ENCODE measurements at regions of chr19 and their contacts with region 1.

Region 1: DNA sequence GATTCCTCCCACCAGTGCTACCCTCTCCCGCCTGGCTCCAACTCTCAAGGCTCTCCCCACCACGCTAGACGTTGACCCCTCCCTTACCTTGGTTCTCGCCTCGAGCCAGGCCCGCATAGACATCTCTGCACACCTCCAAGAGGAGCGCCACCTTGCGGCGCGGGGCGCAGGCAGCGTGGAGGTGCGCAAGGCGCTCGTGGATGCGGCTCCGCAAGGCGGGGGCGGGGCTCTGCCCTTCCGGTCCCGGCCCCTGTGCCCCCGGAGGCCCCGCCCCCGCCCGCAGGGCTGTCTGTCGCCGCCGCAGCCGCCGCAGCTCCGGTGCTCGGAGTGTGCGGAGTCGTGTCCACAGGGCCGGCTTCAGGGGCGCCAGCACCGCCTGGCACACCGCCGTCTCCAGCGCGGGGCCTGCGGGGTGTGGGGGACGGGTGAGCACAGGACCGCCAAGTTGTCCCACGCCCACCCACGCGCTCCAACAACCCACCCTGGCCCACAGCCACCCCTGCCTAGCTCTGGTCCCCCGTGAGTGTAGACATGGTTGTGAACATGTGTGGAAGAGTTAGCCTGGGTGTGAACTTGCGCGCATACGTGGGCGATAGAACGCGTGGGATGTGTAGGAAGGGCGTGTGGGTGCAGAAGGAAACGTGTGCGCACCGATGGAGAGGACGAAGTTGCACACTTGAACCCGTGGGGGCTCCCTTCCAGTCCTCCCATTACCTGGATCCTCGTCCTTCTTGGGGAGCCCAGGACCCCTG is 8.0 kb downstream of the RINL start:
- DNase-seq: peak; percentile 90 to 96 (median 94)
- ATAC-seq: peak; percentile 98
- H3K4me3 ChIP-seq: peak overlapping the region; percentile 85
- H3K4me3 Mint-ChIP-seq: peak overlapping the region; percentile 84 to 94 (median 91)
- H3K27ac ChIP-seq: peak overlapping the region; percentile 77
- H3K27ac Mint-ChIP-seq: peak overlapping the region; percentile 73 to 97 (median 88)
- H3K4me1 ChIP-seq: peaks cover 26 to 31% of the 10 kb centered on the region in 2 donors
- H3K4me1 Mint-ChIP-seq: peaks cover 26 to 63% (median 41%) of the 10 kb centered on the region in 7 donors
- H3K27me3 ChIP-seq: no peaks in the 10 kb centered on the region
- H3K27me3 Mint-ChIP-seq: no peaks in the 10 kb centered on the region

Region 2: GRCh38 chr19:38729653-38730469 is 140.2 kb before region 1 on chr19:
- CTCF ChIA-PET with region 1: no interaction called
- POLR2A ChIA-PET with region 1: interaction called, 3 read pairs
- intact Hi-C with region 1: loop called (anchors 1 to 5 kb)
- DNase-seq: peak; percentile 58 to 83 (median 73)
- ATAC-seq: peak; percentile 78
- H3K4me3 ChIP-seq: no peak overlapping the region
- H3K4me3 Mint-ChIP-seq: no peak overlapping the region
- H3K27ac ChIP-seq: no peak overlapping the region
- H3K27ac Mint-ChIP-seq: peak overlapping the region in 3 of 9 donors; percentile 23 to 48 (median 30)
- H3K4me1 ChIP-seq: peaks cover 9 to 10% of the 10 kb centered on the region in 2 donors
- H3K4me1 Mint-ChIP-seq: peaks cover 5 to 39% (median 13%) of the 10 kb centered on the region in 7 donors
- H3K27me3 ChIP-seq: no peaks in the 10 kb centered on the region
- H3K27me3 Mint-ChIP-seq: no peaks in the 10 kb centered on the region

Region 3: GRCh38 chr19:38842439-38843174 is 27.4 kb before region 1 on chr19:
- CTCF ChIA-PET with region 1: interaction called, 7 read pairs
- POLR2A ChIA-PET with region 1: interaction called, 317 read pairs
- intact Hi-C with region 1: no loop called
- DNase-seq: peak in 6 of 9 donors; percentile 57 to 80 (median 76)
- ATAC-seq: peak; percentile 80
- H3K4me3 ChIP-seq: peak overlapping the region; percentile 24
- H3K4me3 Mint-ChIP-seq: peak overlapping the region; percentile 67 to 93 (median 83)
- H3K27ac ChIP-seq: peak overlapping the region; percentile 67
- H3K27ac Mint-ChIP-seq: peak overlapping the region; percentile 89 to 99 (median 92)
- H3K4me1 ChIP-seq: peaks cover 45 to 66% of the 10 kb centered on the region in 2 donors
- H3K4me1 Mint-ChIP-seq: peaks cover 50 to 83% (median 73%) of the 10 kb centered on the region in 7 donors
- H3K27me3 ChIP-seq: no peaks in the 10 kb centered on the region
- H3K27me3 Mint-ChIP-seq: no peaks in the 10 kb centered on the region

Region 4: GRCh38 chr19:38856813-38857212 is 13.2 kb before region 1 on chr19:
- CTCF ChIA-PET with region 1: interaction called, 20 read pairs
- POLR2A ChIA-PET with region 1: interaction called, 317 read pairs
- intact Hi-C with region 1: loop called (anchors 1 kb)
- DNase-seq: no peak
- ATAC-seq: no peak
- H3K4me3 ChIP-seq: no peak overlapping the region
- H3K4me3 Mint-ChIP-seq: peak overlapping the region in 9 of 10 donors; percentile 8 to 85 (median 69)
- H3K27ac ChIP-seq: peak overlapping the region; percentile 62
- H3K27ac Mint-ChIP-seq: peak overlapping the region in 8 of 9 donors; percentile 47 to 97 (median 84)
- H3K4me1 ChIP-seq: peaks cover 17 to 18% of the 10 kb centered on the region in 2 donors
- H3K4me1 Mint-ChIP-seq: peaks cover 6 to 40% (median 30%) of the 10 kb centered on the region in 7 donors
- H3K27me3 ChIP-seq: no peaks in the 10 kb centered on the region
- H3K27me3 Mint-ChIP-seq: peaks cover 0 to 2% (median 0%) of the 10 kb centered on the region in 5 donors

Region 5: DNA sequence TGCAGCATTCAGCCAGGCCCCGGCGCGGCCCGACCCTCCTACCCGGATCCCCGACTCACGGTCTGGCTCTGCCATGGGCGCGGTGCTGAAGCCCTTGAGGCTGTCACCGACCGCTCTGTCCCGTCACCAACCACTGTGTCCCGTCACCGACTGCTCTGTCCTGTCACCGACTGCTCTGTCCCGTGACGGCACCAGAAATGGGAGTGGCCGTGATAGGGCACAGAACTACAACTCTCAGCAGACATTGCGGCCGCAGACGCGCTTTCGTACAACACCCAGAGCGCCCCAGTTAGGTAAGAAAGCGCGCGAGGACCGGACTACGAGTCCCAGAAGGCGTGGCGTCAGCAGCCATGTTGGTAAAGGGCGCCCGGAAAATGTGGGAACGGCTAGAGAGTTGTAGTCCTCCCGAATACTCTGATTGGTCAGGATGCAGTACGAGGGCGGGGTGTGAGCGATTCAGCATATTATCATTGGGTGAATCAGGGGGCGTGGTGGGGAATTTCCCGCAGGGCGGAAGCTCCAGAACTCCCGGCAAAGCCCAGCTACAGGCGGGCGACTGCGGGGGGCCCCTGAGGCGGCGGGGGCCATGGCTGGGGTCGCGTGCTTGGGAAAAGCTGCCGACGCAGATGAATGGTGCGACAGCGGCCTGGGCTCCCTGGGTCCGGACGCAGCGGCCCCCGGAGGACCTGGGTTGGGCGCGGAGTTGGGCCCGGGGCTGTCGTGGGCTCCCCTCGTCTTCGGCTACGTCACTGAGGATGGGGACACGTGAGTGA is 29.6 kb after region 1 on chr19 and contains the starts of genes NFKBIB and SIRT2:
- CTCF ChIA-PET with region 1: no interaction called
- POLR2A ChIA-PET with region 1: no interaction called
- intact Hi-C with region 1: loop called in 1 of 2 experiments (anchors 1 kb)
- DNase-seq: peak; percentile 86 to 100 (median 99)
- ATAC-seq: peak; percentile 93
- H3K4me3 ChIP-seq: peak within 1 kb of the TSS; percentile 74
- H3K4me3 Mint-ChIP-seq: peak within 1 kb of the TSS; percentile 88 to 100 (median 96)
- H3K27ac ChIP-seq: peak within 1 kb of the TSS; percentile 97
- H3K27ac Mint-ChIP-seq: peak within 1 kb of the TSS; percentile 86 to 99 (median 94)
- H3K4me1 ChIP-seq: peaks cover 15 to 29% of the 10 kb centered on the region in 2 donors
- H3K4me1 Mint-ChIP-seq: peaks cover 27 to 74% (median 50%) of the 10 kb centered on the region in 7 donors
- H3K27me3 ChIP-seq: no peaks in the 10 kb centered on the region
- H3K27me3 Mint-ChIP-seq: no peaks in the 10 kb centered on the region
- total RNA-seq, gene NFKBIB: 21.7 to 51.8 (median 34.1) TPM
- total RNA-seq, gene SIRT2: 42.9 to 78.5 (median 54.0) TPM

Region 6: GRCh38 chr19:39083983-39084731 is 214.1 kb after region 1 on chr19 and contains the start of gene ACP7:
- CTCF ChIA-PET with region 1: no interaction called
- POLR2A ChIA-PET with region 1: no interaction called
- intact Hi-C with region 1: no loop called
- DNase-seq: no peak
- ATAC-seq: peak; percentile 52
- H3K4me3 ChIP-seq: peak within 1 kb of the TSS; percentile 40
- H3K4me3 Mint-ChIP-seq: peak within 1 kb of the TSS; percentile 25 to 86 (median 76)
- H3K27ac ChIP-seq: no peak within 1 kb of the TSS
- H3K27ac Mint-ChIP-seq: peak within 1 kb of the TSS in 3 of 9 donors; percentile 32 to 53 (median 45)
- H3K4me1 ChIP-seq: peaks cover 8 to 11% of the 10 kb centered on the region in 2 donors
- H3K4me1 Mint-ChIP-seq: peaks cover 6 to 20% (median 16%) of the 10 kb centered on the region in 7 donors
- H3K27me3 ChIP-seq: peaks cover 12 to 13% of the 10 kb centered on the region in 2 donors
- H3K27me3 Mint-ChIP-seq: peaks cover 28 to 58% (median 43%) of the 10 kb centered on the region in 5 donors
- total RNA-seq, gene ACP7: not detected

Measured in naive thymus-derived CD4-positive, alpha-beta T cell (primary cell).